Heart left ventricle (tissue), 16 donors: ENCODE measurements at regions of chr15 and their contacts with region 1.

Region 1: DNA sequence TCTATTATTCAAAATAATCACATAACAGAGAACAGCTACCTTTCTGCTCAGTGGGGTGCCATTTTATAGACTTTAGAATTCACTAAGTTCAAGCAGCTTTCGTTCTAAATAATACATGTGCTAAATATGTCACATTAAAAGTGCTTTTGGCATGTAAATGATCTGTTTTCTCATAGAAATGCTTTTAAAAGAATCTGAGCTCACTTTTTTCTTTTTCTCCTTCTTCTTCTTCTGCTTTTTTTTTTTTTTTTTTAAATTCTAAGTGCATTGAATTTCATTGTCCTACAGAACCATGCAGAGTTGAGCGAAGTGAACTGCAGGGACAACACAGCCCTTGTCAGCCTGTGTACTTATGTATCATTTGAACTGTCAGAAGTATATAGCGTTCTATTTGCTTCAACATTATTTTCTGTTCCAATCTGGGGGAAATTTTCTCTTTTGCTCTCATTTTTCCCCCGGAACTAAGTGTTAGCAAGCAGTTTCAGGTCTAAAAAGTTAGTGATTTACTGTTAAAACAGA is 193.8 kb upstream of the TMCO5A start:
- DNase-seq: no peak
- ATAC-seq: no peak
- H3K4me3 ChIP-seq: no peak overlapping the region
- H3K27ac ChIP-seq: no peak overlapping the region
- H3K4me1 ChIP-seq: no peaks in the 10 kb centered on the region
- H3K27me3 ChIP-seq: peaks cover 0 to 11% (median 0%) of the 10 kb centered on the region in 9 donors
- CTCF ChIP-seq: no peak
- POLR2A ChIP-seq: no peak

Region 2: GRCh38 chr15:37359101-37359892 is 381.4 kb before region 1 on chr15:
- intact Hi-C with region 1: no loop called
- DNase-seq: no peak
- ATAC-seq: no peak
- H3K4me3 ChIP-seq: no peak overlapping the region
- H3K27ac ChIP-seq: no peak overlapping the region
- H3K4me1 ChIP-seq: no peaks in the 10 kb centered on the region
- H3K27me3 ChIP-seq: no peaks in the 10 kb centered on the region
- CTCF ChIP-seq: no peak
- POLR2A ChIP-seq: no peak

Region 3: GRCh38 chr15:37801529-37801928 is 60.8 kb after region 1 on chr15:
- intact Hi-C with region 1: loop called in 1 of 10 experiments (anchors 10 kb)
- DNase-seq: no peak
- ATAC-seq: no peak
- H3K4me3 ChIP-seq: no peak overlapping the region
- H3K27ac ChIP-seq: no peak overlapping the region
- H3K4me1 ChIP-seq: no peaks in the 10 kb centered on the region
- H3K27me3 ChIP-seq: no peaks in the 10 kb centered on the region
- CTCF ChIP-seq: no peak
- POLR2A ChIP-seq: no peak

Region 4: DNA sequence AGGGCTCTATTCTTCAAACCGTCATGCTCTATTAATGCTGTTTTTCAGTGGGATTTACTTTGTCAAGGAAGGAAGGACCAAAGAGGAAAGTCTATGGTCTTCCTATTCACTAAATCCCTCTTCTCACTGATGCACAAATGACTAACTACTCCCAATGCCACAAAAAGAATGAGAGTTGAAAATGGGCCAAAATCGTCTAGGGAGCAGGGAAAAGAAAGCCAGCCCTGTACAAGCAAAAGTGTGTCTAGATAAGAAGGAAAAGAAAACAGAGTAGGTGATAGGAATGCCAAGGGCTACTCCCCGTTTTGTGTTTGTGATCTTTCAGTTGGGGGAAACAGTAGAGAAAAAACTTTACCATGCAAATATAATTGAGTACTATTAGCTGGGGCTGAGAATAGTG is 96.6 kb after region 1 on chr15:
- intact Hi-C with region 1: no loop called
- DNase-seq: no peak
- ATAC-seq: no peak
- H3K4me3 ChIP-seq: no peak overlapping the region
- H3K27ac ChIP-seq: no peak overlapping the region
- H3K4me1 ChIP-seq: no peaks in the 10 kb centered on the region
- H3K27me3 ChIP-seq: no peaks in the 10 kb centered on the region
- CTCF ChIP-seq: no peak
- POLR2A ChIP-seq: no peak